ENCODE measurements at regions of chr11 and their contacts with region 1.

Region 1: DNA sequence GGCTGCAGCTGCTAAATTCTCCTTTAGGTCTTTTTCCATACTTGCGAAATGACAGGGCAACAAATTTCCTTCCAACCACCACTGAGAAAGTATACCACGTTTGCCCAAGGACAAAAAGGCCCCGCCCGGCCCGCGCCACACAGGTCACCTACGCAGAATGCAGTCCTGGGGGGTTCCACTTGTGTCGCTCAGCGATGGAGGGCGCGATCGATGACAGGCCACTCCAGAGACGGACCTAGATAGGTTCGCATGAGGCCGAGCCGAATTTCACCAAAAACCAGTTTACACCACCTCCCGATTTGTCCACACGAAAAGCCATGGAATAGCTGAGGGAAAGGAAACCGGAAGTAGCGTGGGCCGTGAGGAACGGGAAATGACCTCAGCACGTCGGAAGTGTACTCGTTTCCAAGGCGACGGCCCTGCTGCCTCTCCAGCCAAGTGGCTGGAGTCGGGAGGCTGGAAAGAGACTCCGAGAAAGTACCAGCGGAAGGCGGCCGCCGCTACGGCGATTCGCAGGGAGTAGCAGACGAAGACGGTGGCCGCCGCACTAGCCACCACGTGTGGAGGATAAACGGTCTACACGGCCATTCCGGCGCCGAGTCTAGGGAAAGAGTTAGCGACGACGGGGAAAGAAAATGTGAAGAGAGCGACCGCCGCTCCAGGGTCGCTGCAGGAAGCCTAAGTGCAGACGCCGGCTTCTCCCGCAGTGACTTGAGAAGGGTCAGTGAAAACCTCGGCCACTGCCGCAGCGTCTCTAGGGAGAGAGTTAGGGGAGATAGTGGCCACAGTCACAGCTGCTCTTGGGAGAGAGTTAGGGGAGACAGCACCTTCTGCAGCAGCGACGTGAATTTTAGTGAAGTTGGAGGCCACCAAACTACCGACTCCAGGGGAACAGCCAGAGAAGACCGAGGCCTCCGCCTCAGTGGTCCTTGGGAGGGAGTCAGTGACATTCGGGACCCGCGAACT is at the start of gene ANKRD42:
- DNase-seq: peak; percentile 95
- ATAC-seq: peak; percentile 72
- H3K4me3 ChIP-seq: peak within 1 kb of the TSS; percentile 58 to 99 (median 96)
- H3K4me3 Mint-ChIP-seq: peak within 1 kb of the TSS; percentile 98
- H3K27ac ChIP-seq: peak within 1 kb of the TSS; percentile 93 to 96
- H3K27ac Mint-ChIP-seq: peak within 1 kb of the TSS; percentile 97
- H3K4me1 ChIP-seq: peaks cover 22 to 29% of the 10 kb centered on the region in 2 donors
- H3K4me1 Mint-ChIP-seq: peaks cover 49% of the 10 kb centered on the region
- H3K27me3 ChIP-seq: no peaks in the 10 kb centered on the region
- H3K27me3 Mint-ChIP-seq: no peaks in the 10 kb centered on the region
- CTCF ChIP-seq: no peak
- total RNA-seq, gene ANKRD42: 13.3 and 14.5 TPM in 2 replicates

Region 2: GRCh38 chr11:82906244-82906654 is 287.3 kb before region 1 on chr11:
- CTCF ChIA-PET with region 1: no interaction called
- POLR2A ChIA-PET with region 1: no interaction called
- intact Hi-C with region 1: loop called (anchors 1 kb)
- DNase-seq: peak; percentile 64
- ATAC-seq: no peak
- H3K4me3 ChIP-seq: no peak overlapping the region
- H3K4me3 Mint-ChIP-seq: no peak overlapping the region
- H3K27ac ChIP-seq: no peak overlapping the region
- H3K27ac Mint-ChIP-seq: no peak overlapping the region
- H3K4me1 ChIP-seq: peaks cover 17 to 32% of the 10 kb centered on the region in 2 donors
- H3K4me1 Mint-ChIP-seq: peaks cover 32% of the 10 kb centered on the region
- H3K27me3 ChIP-seq: no peaks in the 10 kb centered on the region
- H3K27me3 Mint-ChIP-seq: no peaks in the 10 kb centered on the region
- CTCF ChIP-seq: peak; percentile 84

Region 3: DNA sequence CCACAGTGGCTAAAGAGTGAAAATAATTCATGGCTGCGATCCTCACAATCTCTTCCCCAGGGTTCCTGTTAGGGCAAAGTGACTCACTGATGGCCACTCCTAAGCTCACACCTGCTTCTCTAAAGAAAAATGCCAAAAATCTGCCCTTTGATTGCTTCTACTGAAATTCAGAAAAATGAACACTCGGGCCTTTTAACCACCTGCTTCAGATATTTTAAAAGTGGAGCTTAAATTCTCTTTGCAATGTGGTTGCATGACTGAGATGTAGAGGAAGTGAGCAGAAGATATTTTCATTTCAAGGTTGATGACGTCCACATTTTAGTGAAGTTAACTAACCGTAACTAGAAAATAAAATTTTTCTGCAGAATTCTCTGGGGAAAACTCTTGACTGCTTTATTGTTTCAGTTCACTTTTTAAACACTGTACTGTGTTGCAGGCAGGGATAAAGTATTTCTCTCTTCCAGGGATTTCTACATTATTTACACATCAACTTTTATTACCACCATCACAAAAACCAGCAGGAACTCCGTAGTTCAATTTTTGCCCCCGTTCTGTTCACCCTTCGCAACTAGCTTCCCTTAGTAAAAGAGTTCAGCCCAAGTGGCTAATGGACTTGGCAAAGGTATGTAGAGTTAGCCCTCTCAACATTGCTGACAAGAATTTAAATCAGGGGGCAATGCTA is 130.4 kb before region 1 on chr11:
- CTCF ChIA-PET with region 1: interaction called, 3 read pairs
- POLR2A ChIA-PET with region 1: no interaction called
- intact Hi-C with region 1: loop called (anchors 2 kb)
- DNase-seq: peak; percentile 91
- ATAC-seq: peak; percentile 68
- H3K4me3 ChIP-seq: peak overlapping the region; percentile 35 to 62 (median 51)
- H3K4me3 Mint-ChIP-seq: peak overlapping the region; percentile 89
- H3K27ac ChIP-seq: peak overlapping the region; percentile 86 to 94
- H3K27ac Mint-ChIP-seq: peak overlapping the region; percentile 98
- H3K4me1 ChIP-seq: peaks cover 92 to 95% of the 10 kb centered on the region in 2 donors
- H3K4me1 Mint-ChIP-seq: peaks cover 85% of the 10 kb centered on the region
- H3K27me3 ChIP-seq: no peaks in the 10 kb centered on the region
- H3K27me3 Mint-ChIP-seq: no peaks in the 10 kb centered on the region
- CTCF ChIP-seq: no peak

Region 4: GRCh38 chr11:83249972-83250593 is 56.5 kb after region 1 on chr11:
- CTCF ChIA-PET with region 1: interaction called, 4 read pairs
- POLR2A ChIA-PET with region 1: no interaction called
- intact Hi-C with region 1: loop called (anchors 10 kb)
- DNase-seq: peak; percentile 62
- ATAC-seq: peak; percentile 63
- H3K4me3 ChIP-seq: no peak overlapping the region
- H3K4me3 Mint-ChIP-seq: no peak overlapping the region
- H3K27ac ChIP-seq: no peak overlapping the region
- H3K27ac Mint-ChIP-seq: no peak overlapping the region
- H3K4me1 ChIP-seq: peaks cover 4 to 6% of the 10 kb centered on the region in 2 donors
- H3K4me1 Mint-ChIP-seq: peaks cover 14% of the 10 kb centered on the region
- H3K27me3 ChIP-seq: no peaks in the 10 kb centered on the region
- H3K27me3 Mint-ChIP-seq: no peaks in the 10 kb centered on the region
- CTCF ChIP-seq: peak; percentile 83

Region 5: GRCh38 chr11:83285771-83286528 is 92.4 kb after region 1 on chr11 and contains the start of gene CCDC90B:
- CTCF ChIA-PET with region 1: no interaction called
- POLR2A ChIA-PET with region 1: interaction called, 3 read pairs
- intact Hi-C with region 1: loop called (anchors 1 kb)
- DNase-seq: peak; percentile 97
- ATAC-seq: peak; percentile 86
- H3K4me3 ChIP-seq: peak within 1 kb of the TSS; percentile 77 to 97 (median 91)
- H3K4me3 Mint-ChIP-seq: peak within 1 kb of the TSS; percentile 97
- H3K27ac ChIP-seq: peak within 1 kb of the TSS; percentile 92 to 96
- H3K27ac Mint-ChIP-seq: peak within 1 kb of the TSS; percentile 99
- H3K4me1 ChIP-seq: peaks cover 40 to 47% of the 10 kb centered on the region in 2 donors
- H3K4me1 Mint-ChIP-seq: peaks cover 59% of the 10 kb centered on the region
- H3K27me3 ChIP-seq: no peaks in the 10 kb centered on the region
- H3K27me3 Mint-ChIP-seq: no peaks in the 10 kb centered on the region
- CTCF ChIP-seq: no peak
- total RNA-seq, gene CCDC90B: 35.2 and 39.1 TPM in 2 replicates